Right ventricle myocardium inferior (tissue), 1 donor: ENCODE measurements at regions of chr15 and their contacts with region 1.

Region 1: GRCh38 chr15:92306663-92307062 is 87.0 kb upstream of the ST8SIA2 start:
- DNase-seq: no peak
- ATAC-seq: no peak

Region 2: DNA sequence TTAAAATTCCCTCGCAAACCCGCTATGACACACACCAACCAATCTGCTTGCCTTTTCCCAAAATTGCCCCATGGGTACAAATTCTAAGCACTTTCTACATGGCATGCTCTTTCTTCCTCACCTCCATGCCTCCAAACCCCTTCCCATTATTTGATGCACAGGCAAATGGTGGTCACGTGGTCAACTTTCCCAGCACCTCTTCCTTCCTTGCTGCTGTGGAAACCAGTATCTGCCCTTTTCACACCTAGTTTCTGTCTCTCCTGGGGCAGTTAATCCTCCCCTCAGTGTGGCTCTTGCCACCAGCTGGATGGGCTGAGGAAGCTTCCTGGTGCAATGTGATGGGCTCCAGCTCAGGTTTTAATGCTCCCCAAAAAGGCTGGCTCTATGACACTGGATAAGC is 48.6 kb after region 1 on chr15:
- intact Hi-C with region 1: loop called (anchors 2 kb)
- DNase-seq: no peak
- ATAC-seq: no peak